SK-N-SH (cell line): ENCODE measurements at regions of chr15 and their contacts with region 1.

Region 1: DNA sequence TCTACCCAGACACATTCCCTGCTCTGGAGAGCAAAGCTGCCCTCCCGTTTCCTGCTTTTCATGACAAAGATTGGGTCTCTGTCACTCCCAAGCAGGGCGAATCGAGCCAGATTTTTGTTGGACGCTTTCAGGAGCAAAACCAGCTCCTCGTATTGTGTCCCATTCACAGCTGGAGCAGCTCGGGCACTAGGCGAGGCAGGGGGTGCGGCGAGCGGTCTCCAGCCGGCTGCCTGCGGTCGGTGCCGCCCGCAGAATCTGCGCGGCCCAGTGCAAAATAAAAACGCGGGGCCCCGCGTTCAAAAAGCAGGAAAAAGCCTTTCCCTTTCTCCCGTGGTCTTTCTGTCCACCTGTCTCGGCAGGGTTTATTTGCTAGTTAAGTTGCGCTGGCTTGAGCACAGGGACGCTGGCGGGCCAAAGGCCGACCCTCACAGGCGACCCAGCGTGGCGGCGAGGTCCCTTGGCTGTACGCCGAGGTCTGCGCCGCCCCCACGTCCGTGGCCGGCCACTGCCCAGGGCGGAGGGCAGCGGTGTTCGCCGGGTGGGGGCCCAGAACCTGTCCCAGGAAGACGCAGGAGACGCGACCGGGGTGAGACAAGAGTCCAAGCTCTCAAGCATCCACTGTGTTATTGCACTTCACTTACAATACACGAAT is 71.2 kb downstream of the CYP19A1 start:
- DNase-seq: peak; percentile 46
- H3K4me3 ChIP-seq: peak overlapping the region; percentile 14 to 47; a peak in 2 of 4 replicates
- H3K27ac ChIP-seq: no peak overlapping the region
- H3K4me1 ChIP-seq: peaks cover 0 to 5% of the 10 kb centered on the region in 2 experiments; a peak in 1 of 4 replicates
- H3K27me3 ChIP-seq: peaks cover 25% of the 10 kb centered on the region; the same call in 1 of the 2 replicates
- CTCF ChIP-seq: no peak
- EP300 ChIP-seq: no peak
- RAD21 ChIP-seq: no peak

Region 2: DNA sequence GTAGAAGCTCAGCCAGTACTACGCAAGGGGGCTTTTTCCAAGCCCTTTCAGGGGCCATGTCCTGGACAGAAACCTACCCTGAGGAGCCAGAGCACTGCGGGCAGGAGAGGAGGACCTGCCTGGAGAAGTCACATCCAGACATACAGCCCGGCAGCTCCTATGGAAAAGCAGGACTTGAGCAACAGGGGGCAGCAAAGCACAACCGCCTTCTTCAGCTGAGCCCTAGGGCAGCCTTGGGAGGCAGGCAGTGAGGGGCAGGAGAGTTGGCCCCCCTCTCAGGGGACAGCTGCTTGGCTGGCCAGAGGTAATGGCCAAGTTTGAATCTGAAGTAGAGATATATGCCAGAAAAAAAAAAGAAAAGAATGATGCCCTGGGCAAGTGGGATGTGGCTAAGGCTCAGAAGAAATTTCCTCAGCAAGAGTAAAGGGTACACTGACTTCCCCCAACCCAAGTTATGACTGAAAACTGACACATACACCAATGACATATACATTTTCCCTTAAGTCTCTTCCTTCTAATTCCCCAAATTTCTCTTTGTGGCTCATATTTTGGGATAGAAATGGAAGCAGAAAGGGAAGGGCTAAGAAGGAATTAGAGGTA is 14.3 kb after region 1 on chr15:
- CTCF ChIA-PET with region 1: interaction called, 10 read pairs
- POLR2A ChIA-PET with region 1: no interaction called
- DNase-seq: peak; percentile 60
- H3K4me3 ChIP-seq: no peak overlapping the region; a peak in 1 of 4 replicates
- H3K27ac ChIP-seq: no peak overlapping the region
- H3K4me1 ChIP-seq: peaks cover 0 to 8% of the 10 kb centered on the region in 2 experiments; a peak in 1 of 4 replicates
- H3K27me3 ChIP-seq: peaks cover 21% of the 10 kb centered on the region; the same call in 1 of the 2 replicates
- CTCF ChIP-seq: peak; percentile 52
- EP300 ChIP-seq: no peak
- RAD21 ChIP-seq: peak; percentile 70